Activated CD4-positive, alpha-beta T cell treated with anti-CD3 and anti-CD28 coated beads, Interleukin-2, amount 10 ng/mL, durations not matched to agents 24 days and 14 days (primary cell): ENCODE measurements at regions of chr15 and their contacts with region 1.

Region 1: GRCh38 chr15:59274126-59274970 is 67.7 kb downstream of the LDHAL6B start:
- DNase-seq: peak; percentile 75
- H3K4me3 Mint-ChIP-seq: peak overlapping the region; percentile 71
- H3K27ac Mint-ChIP-seq: peak overlapping the region; percentile 80
- H3K4me1 Mint-ChIP-seq: peaks cover 62% of the 10 kb centered on the region
- H3K27me3 Mint-ChIP-seq: peaks cover 8% of the 10 kb centered on the region

Region 2: DNA sequence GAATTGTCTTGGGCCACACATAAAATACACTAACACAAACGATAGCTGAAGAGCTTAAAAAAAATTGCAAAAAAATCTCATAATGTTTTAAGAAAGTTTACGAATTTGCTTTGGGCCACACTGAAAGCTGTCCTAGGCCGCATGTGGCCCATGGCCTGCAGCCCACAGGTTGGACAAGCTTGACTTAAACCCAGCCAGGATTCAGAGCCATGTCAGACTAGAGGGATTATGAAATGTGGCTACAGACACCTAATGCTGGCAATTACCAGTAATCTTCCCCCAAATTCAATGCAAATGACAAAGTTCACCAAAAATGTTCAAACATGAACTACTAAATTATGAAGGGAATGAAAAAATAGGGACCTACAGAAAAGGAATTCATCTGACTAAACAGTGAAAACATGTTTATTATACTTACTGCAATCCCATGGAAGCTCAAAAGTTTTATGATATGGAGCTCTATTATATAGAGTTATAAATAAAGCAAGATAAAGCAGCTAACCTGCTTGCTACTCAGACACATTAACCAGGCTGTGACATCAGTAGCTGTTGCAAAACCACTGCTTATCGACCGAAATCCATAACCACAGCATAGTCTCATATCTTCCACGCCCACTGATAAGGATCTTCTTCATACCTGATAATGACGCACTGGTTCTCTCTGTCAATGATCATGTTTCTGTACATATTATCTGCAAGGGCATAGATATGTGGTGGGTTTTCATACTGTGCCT is 18.5 kb before region 1 on chr15:
- intact Hi-C with region 1: loop called (anchors 2 kb)
- DNase-seq: peak; percentile 84
- H3K4me3 Mint-ChIP-seq: peak overlapping the region; percentile 31
- H3K27ac Mint-ChIP-seq: peak overlapping the region; percentile 76
- H3K4me1 Mint-ChIP-seq: peaks cover 50% of the 10 kb centered on the region
- H3K27me3 Mint-ChIP-seq: no peaks in the 10 kb centered on the region

Region 3: DNA sequence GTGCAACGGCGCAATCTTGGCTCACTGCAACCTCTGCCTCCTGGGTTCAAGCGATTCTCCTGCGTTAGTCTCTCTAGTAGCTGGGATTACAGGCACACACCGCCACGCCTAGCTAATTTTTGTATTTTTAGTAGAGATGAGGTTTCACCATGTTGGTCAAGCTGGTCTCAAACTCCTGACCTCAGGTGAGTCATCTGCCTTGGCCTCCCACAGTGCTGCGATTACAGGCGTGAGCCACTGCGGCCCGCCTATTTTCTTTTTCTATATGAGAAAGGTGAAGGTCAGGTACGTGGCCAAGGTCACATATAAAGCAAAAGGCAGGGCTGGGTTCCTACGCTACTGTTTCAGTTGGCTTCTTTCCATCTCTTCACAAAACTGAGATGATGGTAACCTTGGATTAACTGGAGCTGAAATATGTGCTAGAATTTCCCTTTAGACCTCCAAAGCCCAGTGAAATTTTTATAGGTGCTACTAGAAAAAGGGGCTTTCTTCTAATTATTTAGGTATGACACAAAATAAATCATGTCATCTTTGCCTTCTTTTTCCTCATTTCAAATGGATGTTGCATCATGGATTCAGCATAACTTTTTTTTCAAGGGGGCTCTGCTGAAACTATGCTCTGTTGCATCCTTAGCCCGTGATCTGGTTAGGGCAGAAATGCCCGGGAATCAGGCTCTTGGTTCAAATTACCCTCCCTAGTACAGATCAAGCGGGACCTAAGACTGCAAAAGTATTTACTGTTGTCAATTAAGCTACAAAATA is 29.9 kb after region 1 on chr15:
- intact Hi-C with region 1: no loop called
- DNase-seq: no peak
- H3K4me3 Mint-ChIP-seq: no peak overlapping the region
- H3K27ac Mint-ChIP-seq: no peak overlapping the region
- H3K4me1 Mint-ChIP-seq: peaks cover 43% of the 10 kb centered on the region
- H3K27me3 Mint-ChIP-seq: no peaks in the 10 kb centered on the region

Region 4: DNA sequence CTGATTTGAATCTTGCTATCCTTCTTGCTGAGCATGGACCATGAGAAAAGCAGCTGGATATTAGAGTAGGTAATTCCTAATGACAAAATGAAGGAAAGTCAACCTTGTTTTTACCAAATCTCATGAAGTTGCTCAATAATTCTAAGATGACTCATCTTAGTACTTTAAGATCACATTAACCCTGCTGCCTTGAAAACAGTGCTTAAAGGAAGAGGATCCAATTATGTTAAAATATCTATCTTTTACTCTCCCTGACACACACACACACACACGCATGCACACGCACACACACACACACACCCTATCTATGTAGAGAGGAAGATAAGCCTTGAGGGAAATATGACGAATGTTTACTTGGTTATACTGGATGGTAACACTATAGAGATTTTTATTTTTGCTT is 114.3 kb after region 1 on chr15:
- intact Hi-C with region 1: no loop called
- DNase-seq: no peak
- H3K4me3 Mint-ChIP-seq: no peak overlapping the region
- H3K27ac Mint-ChIP-seq: no peak overlapping the region
- H3K4me1 Mint-ChIP-seq: peaks cover 13% of the 10 kb centered on the region
- H3K27me3 Mint-ChIP-seq: peaks cover 5% of the 10 kb centered on the region